ENCODE measurements at regions of chr12 and their contacts with region 1.

Region 1: GRCh38 chr12:3202734-3203446 is 125.7 kb downstream of the TSPAN9 start:
- DNase-seq: peak; percentile 64
- ATAC-seq: no peak
- H3K4me3 Mint-ChIP-seq: no peak overlapping the region
- H3K27ac Mint-ChIP-seq: no peak overlapping the region
- H3K4me1 Mint-ChIP-seq: peaks cover 6% of the 10 kb centered on the region
- H3K27me3 Mint-ChIP-seq: peaks cover 49% of the 10 kb centered on the region

Region 2: GRCh38 chr12:3073438-3074250 is 129.2 kb before region 1 on chr12:
- CTCF ChIA-PET with region 1: interaction called, 15 read pairs
- DNase-seq: peak; percentile 87
- ATAC-seq: peak; percentile 48
- H3K4me3 Mint-ChIP-seq: no peak overlapping the region
- H3K27ac Mint-ChIP-seq: peak overlapping the region; percentile 36
- H3K4me1 Mint-ChIP-seq: peaks cover 11% of the 10 kb centered on the region
- H3K27me3 Mint-ChIP-seq: peaks cover 28% of the 10 kb centered on the region

Region 3: GRCh38 chr12:3122835-3123678 is 79.8 kb before region 1 on chr12:
- CTCF ChIA-PET with region 1: no interaction called
- DNase-seq: no peak
- ATAC-seq: no peak
- H3K4me3 Mint-ChIP-seq: no peak overlapping the region
- H3K27ac Mint-ChIP-seq: no peak overlapping the region
- H3K4me1 Mint-ChIP-seq: peaks cover 11% of the 10 kb centered on the region
- H3K27me3 Mint-ChIP-seq: peaks cover 28% of the 10 kb centered on the region

Region 4: GRCh38 chr12:3135522-3136461 is 67.1 kb before region 1 on chr12:
- CTCF ChIA-PET with region 1: interaction called, 15 read pairs
- DNase-seq: peak; percentile 56
- ATAC-seq: peak; percentile 73
- H3K4me3 Mint-ChIP-seq: no peak overlapping the region
- H3K27ac Mint-ChIP-seq: no peak overlapping the region
- H3K4me1 Mint-ChIP-seq: no peaks in the 10 kb centered on the region
- H3K27me3 Mint-ChIP-seq: peaks cover 26% of the 10 kb centered on the region

Measured in activated CD8-positive, alpha-beta memory T cell treated with anti-CD3 and anti-CD28 coated beads, Interleukin-2, amount 10 ng/mL, durations not matched to agents 7 days and 5 days (primary cell).